ENCODE measurements at regions of chr9 and their contacts with region 1.

Region 1: GRCh38 chr9:89929673-89930480 is 325.1 kb downstream of the GADD45G start:
- DNase-seq: no peak
- H3K4me3 Mint-ChIP-seq: no peak overlapping the region
- H3K27ac Mint-ChIP-seq: no peak overlapping the region
- H3K4me1 Mint-ChIP-seq: peaks cover 22% of the 10 kb centered on the region
- H3K27me3 Mint-ChIP-seq: peaks cover 16% of the 10 kb centered on the region

Region 2: DNA sequence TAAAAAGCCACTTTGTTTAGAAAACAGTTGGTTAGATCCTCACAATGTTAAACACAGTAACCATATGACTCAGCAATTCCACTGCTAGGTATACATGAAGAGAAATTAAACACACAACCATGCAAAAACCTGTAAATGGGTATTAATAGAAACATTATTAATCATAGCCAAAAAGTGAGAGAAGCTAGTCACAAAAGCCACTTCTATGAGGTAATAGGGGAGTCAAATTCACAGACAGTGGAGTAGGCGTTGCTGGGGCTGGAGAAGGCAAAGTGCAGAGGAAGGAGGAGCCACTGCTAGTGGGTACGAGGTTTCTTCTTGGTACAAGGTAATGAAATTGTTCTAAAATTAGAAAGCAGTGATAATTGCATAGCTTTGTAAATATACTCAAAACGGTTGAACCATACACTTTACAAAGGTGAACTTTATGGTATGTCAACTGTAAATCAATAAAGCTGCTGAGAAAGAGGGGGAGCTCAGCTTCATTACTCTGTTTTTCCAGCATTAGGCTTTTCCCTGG is 39.3 kb after region 1 on chr9:
- intact Hi-C with region 1: loop called (anchors 5 kb)
- DNase-seq: no peak
- H3K4me3 Mint-ChIP-seq: peak overlapping the region; percentile 18
- H3K27ac Mint-ChIP-seq: peak overlapping the region; percentile 63
- H3K4me1 Mint-ChIP-seq: peaks cover 37% of the 10 kb centered on the region
- H3K27me3 Mint-ChIP-seq: peaks cover 3% of the 10 kb centered on the region

Region 3: GRCh38 chr9:90025816-90026215 is 95.9 kb after region 1 on chr9:
- intact Hi-C with region 1: no loop called
- DNase-seq: no peak
- H3K4me3 Mint-ChIP-seq: no peak overlapping the region
- H3K27ac Mint-ChIP-seq: no peak overlapping the region
- H3K4me1 Mint-ChIP-seq: no peaks in the 10 kb centered on the region
- H3K27me3 Mint-ChIP-seq: peaks cover 29% of the 10 kb centered on the region

Measured in activated CD4-positive, alpha-beta T cell treated with anti-CD3 and anti-CD28 coated beads, Interleukin-2, amount 10 ng/mL, durations not matched to agents 24 days and 14 days (primary cell).